Dorsolateral prefrontal cortex (tissue), 120 donors: ENCODE measurements at regions of chrX and their contacts with region 1.

Region 1: GRCh38 chrX:38192007-38192810 is 28.5 kb downstream of the SRPX start:
- DNase-seq: peak in 1 of 10 donors; percentile 41
- H3K4me3 ChIP-seq: no peak overlapping the region
- H3K27ac ChIP-seq: no peak overlapping the region
- H3K27me3 ChIP-seq: peaks cover 0 to 87% (median 30%) of the 10 kb centered on the region in 45 donors
- CTCF ChIP-seq: peak in 32 of 56 donors; percentile 8 to 49 (median 21)

Region 2: DNA sequence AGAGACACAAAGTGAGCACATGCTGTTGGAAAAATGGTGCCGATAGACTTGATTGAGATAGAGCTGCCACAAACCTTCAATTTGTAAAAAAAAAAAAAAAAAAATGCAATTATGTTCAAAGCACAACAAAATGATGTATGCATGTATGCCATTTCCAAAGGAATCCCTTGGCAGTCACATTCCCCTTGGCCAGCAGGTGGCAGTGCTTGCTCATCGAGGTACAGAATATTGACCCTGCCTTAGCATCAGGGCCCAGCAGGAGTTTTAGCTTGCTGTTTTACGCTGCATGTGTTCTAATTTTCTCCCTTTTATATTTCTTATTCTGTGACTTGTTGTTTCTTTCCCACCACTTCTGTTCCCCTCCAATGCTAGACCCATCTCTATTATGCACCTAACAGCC is 446.9 kb before region 1 on chrX:
- intact Hi-C with region 1: no loop called
- DNase-seq: peak; percentile 59 to 84 (median 70)
- H3K4me3 ChIP-seq: no peak overlapping the region
- H3K27ac ChIP-seq: no peak overlapping the region
- H3K27me3 ChIP-seq: peaks cover 0 to 48% (median 3%) of the 10 kb centered on the region in 45 donors
- CTCF ChIP-seq: peak; percentile 44 to 88 (median 80)

Region 3: DNA sequence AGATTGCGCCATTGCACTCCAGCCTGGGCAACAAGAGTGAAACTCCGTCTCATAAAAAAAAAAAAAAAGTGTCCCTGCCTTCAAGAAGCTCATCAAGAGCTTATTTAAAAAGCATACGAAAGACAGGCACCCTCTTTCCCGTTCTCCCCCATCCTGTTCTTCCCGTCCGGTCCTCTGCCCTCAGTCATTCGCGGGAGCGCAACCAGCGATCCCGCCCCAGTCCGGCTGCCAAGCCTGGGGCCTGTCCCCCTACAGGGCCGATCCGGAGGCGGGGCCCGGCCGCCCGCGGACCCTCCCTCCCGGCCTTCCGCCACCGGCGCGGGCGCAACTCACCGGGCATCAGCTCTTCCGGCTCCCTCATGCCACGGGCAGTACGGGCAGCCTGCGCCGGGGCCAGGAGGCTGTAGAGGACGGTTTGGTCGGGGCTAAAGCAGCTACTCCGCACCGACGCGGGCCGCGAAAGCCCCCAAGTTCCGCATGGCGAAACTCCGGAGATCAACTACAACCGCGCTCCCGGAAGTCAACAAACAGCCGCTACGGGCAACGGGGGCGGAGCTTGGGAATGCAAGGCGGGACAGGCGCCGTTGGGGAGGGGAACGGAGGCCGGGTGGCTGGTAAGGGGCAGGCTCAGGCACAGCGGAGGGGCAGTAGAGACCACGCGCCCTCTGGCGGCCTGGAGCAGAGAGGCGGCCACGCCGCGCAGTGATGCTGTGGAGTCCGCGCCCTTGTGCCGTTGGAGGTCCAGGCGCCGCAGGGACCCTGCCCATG is 135.0 kb after region 1 on chrX and contains the start of gene RPGR:
- intact Hi-C with region 1: loop called in 1 of 2 experiments (anchors 10 kb)
- DNase-seq: peak; percentile 83 to 93 (median 90)
- H3K4me3 ChIP-seq: peak within 1 kb of the TSS; percentile 47 to 82 (median 68)
- H3K27ac ChIP-seq: peak within 1 kb of the TSS in 53 of 59 donors; percentile 23 to 84 (median 69)
- H3K27me3 ChIP-seq: peaks cover 0 to 35% (median under 1%) of the 10 kb centered on the region in 45 donors
- CTCF ChIP-seq: peak; percentile 37 to 88 (median 75)
- total RNA-seq, gene RPGR: 8.2 to 33.6 (median 16.5) TPM

Region 4: GRCh38 chrX:39017081-39017480 is 824.9 kb after region 1 on chrX:
- intact Hi-C with region 1: no loop called
- DNase-seq: no peak
- H3K4me3 ChIP-seq: no peak overlapping the region
- H3K27ac ChIP-seq: no peak overlapping the region
- H3K27me3 ChIP-seq: peaks cover 0 to 64% (median 7%) of the 10 kb centered on the region in 45 donors
- CTCF ChIP-seq: no peak